PC-9 (cell line): ENCODE measurements at regions of chr15 and their contacts with region 1.

Region 1: DNA sequence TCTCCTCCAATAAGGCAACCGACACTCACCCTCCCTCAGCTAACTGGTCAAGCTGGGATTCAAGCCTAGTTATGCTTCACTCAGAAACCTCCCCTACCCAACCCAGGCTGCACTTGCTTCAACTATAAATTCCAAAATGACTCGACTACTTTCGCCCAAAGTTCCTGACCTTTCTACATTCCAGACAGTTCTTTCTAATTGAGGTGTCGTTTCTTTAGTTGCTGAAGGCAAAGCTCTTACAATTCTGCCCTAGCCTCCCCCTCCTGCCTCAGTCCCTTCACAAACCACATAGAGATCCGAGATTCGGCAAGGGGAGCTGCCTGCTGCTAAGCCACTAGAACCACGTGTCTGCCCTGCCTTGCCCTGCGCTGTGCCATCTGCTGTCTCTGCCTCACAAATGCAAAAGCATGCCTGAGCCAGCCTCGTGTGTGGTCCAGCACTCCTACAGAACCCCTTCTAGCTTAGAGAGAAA is 74.7 kb upstream of the SH3GL3 start:
- DNase-seq: peak; percentile 22 to 67
- H3K4me3 ChIP-seq: no peak overlapping the region
- H3K27ac ChIP-seq: 0 out of 2 replicates have a peak overlapping the region, but pooled peaks have one; percentile 25
- H3K4me1 ChIP-seq: peaks cover 14% of the 10 kb centered on the region
- H3K27me3 ChIP-seq: no peaks in the 10 kb centered on the region
- CTCF ChIP-seq: no peak

Region 2: GRCh38 chr15:82849556-82850512 is 522.6 kb before region 1 on chr15:
- CTCF ChIA-PET with region 1: no interaction called
- POLR2A ChIA-PET with region 1: no interaction called
- intact Hi-C with region 1: no loop called
- DNase-seq: peak; percentile 44 to 46
- H3K4me3 ChIP-seq: no peak overlapping the region
- H3K27ac ChIP-seq: no peak overlapping the region
- H3K4me1 ChIP-seq: no peaks in the 10 kb centered on the region
- H3K27me3 ChIP-seq: no peaks in the 10 kb centered on the region
- CTCF ChIP-seq: peak; percentile 65

Region 3: DNA sequence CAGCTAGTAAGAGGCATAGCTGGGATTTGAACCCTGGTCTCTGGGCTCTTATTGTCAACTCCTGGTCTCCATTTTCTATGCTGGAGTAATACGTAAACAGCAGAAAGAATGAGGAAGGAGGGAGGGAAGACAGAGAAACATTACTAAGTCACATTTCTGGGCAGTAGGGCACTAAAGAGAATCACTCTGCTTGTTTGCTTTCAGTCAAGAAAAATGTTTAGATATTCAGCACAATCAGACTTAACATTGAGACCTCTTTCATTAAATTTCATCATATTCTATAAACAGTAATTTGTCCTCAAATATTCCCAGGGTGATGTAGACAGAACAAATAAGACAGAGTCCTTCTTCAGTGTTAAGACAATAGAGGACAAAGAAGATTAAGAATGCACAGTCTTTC is 20.3 kb before region 1 on chr15:
- CTCF ChIA-PET with region 1: no interaction called
- POLR2A ChIA-PET with region 1: interaction called, 32 read pairs
- intact Hi-C with region 1: no loop called
- DNase-seq: peak in 1 of 2 experiments; percentile 37
- H3K4me3 ChIP-seq: no peak overlapping the region
- H3K27ac ChIP-seq: peak overlapping the region; percentile 91
- H3K4me1 ChIP-seq: peaks cover 22% of the 10 kb centered on the region
- H3K27me3 ChIP-seq: no peaks in the 10 kb centered on the region
- CTCF ChIP-seq: no peak